Endothelial cell of umbilical vein (primary cell): ENCODE measurements at regions of chr14 and their contacts with region 1.

Region 1: DNA sequence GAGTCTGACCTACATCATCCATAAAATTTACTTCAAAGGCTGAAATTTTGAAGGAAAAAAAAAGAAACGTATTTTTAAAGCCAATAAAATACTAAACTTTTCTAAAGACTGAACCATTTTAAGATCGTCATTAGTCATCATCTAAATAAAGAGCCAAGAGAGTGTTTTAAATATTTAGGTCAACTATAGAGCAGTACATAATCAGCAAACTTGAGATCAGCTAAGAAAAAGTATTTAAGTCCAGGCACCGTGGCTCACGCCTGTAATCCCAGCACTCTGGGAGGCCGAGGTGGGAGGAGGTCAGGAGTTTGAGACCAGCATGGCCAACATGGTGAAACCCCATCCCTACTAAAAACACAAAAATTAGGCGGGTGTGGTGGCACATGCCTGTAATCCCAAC is 35.5 kb downstream of the HECTD1 start:
- DNase-seq: no peak
- H3K4me3 ChIP-seq: no peak overlapping the region
- H3K27ac ChIP-seq: no peak overlapping the region
- H3K4me1 ChIP-seq: no peaks in the 10 kb centered on the region
- H3K27me3 ChIP-seq: no peaks in the 10 kb centered on the region
- CTCF ChIP-seq: no peak
- POLR2A ChIP-seq: no peak

Region 2: GRCh38 chr14:31084385-31084784 is 87.7 kb before region 1 on chr14:
- CTCF ChIA-PET with region 1: no interaction called
- POLR2A ChIA-PET with region 1: no interaction called
- dilution Hi-C with region 1: no loop called
- intact Hi-C with region 1: no loop called
- DNase-seq: no peak
- H3K4me3 ChIP-seq: no peak overlapping the region
- H3K27ac ChIP-seq: no peak overlapping the region
- H3K4me1 ChIP-seq: no peaks in the 10 kb centered on the region
- H3K27me3 ChIP-seq: no peaks in the 10 kb centered on the region
- CTCF ChIP-seq: no peak
- POLR2A ChIP-seq: no peak

Region 3: DNA sequence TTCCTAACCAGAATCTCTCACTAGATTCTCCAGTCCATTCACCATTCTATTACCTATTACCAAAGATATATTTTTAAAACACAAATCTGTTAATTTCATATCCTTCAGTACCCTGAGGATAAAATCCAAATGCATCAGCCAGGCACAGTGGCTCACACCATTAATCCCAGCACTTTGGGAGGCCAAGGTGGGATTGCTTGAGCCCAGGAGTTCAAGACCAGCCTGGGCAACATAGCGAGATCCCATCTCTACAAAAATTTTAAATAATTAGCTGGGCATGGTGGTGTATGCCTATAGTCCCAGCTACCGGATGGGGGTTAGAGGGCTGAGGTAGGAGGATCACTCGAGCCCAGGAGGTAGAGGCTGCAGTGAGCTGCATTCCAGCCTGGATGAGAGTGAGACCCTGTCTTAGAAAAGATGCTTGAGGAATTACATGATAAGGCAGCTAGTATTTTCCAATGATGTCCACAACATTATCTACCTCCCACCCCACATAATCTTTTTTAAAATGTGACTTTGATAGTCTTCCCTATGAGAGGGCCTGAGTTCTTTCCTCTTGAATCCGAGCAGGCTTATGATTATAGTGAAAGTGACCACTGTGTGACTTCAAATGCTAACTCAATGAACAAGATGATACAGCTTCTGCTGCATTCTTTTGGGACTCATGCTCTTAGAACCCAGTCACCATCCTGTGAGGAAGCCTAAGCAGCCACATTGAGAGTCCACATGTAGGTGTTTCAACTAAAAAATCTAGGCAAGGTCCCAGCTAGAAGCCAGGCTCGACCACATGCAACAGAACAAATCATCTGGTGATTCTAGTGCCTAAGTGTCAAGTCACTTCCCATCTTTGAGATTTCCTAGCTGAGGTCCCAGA is 17.5 kb after region 1 on chr14:
- CTCF ChIA-PET with region 1: no interaction called
- POLR2A ChIA-PET with region 1: no interaction called
- dilution Hi-C with region 1: no loop called
- intact Hi-C with region 1: no loop called
- DNase-seq: no peak
- H3K4me3 ChIP-seq: no peak overlapping the region
- H3K27ac ChIP-seq: no peak overlapping the region
- H3K4me1 ChIP-seq: peaks cover under 1% of the 10 kb centered on the region
- H3K27me3 ChIP-seq: no peaks in the 10 kb centered on the region
- CTCF ChIP-seq: no peak
- POLR2A ChIP-seq: no peak

Region 4: GRCh38 chr14:31326111-31326510 is 154.0 kb after region 1 on chr14:
- CTCF ChIA-PET with region 1: interaction called, 3 read pairs
- POLR2A ChIA-PET with region 1: no interaction called
- dilution Hi-C with region 1: no loop called
- intact Hi-C with region 1: loop called (anchors 5 kb)
- DNase-seq: peak; percentile 41
- H3K4me3 ChIP-seq: no peak overlapping the region
- H3K27ac ChIP-seq: no peak overlapping the region
- H3K4me1 ChIP-seq: no peaks in the 10 kb centered on the region
- H3K27me3 ChIP-seq: no peaks in the 10 kb centered on the region
- CTCF ChIP-seq: no peak
- POLR2A ChIP-seq: no peak